ENCODE measurements at regions of chrX and their contacts with region 1.

Region 1: DNA sequence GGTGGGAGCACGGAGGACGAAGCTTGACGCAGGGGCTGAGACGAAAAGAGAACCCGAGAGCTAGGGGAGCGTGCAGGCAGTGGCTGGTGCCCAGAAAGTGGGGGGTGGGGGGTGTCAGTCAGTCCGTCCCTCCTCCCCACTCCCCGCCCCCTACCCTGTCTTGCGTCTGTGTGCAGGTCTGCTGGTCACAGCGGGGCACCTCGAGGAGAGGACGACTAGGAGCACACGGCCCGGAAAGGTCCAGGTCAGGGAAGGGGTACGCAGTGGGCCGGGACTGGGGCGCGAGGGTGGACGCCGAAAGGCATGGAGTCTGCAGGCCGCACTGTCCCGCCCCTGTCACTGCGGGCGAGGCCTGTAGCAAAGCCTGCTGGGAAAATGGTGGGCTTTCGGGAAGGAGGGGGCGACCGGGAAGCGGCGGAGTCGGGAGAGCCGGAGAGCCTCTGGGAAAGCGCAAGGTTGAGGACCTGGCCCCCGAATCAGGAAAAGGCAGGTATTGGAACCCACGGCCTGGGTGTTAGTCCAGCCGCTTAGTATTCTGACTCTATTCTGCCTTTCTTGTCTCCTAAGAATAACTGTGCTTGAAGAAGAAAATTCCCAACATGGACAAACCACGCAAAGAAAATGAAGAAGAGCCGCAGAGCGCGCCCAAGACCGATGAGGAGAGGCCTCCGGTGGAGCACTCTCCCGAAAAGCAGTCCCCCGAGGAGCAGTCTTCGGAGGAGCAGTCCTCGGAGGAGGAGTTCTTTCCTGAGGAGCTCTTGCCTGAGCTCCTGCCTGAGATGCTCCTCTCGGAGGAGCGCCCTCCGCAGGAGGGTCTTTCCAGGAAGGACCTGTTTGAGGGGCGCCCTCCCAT is 769 bp downstream of the TCEAL1 start:
- DNase-seq: peak; percentile 66 to 77 (median 72)
- ATAC-seq: peak; percentile 90 to 94 (median 93)
- H3K4me3 ChIP-seq: peak overlapping the region; percentile 39 to 94 (median 72)
- H3K27ac ChIP-seq: peak overlapping the region; percentile 70 to 97 (median 93)
- H3K4me1 ChIP-seq: peaks cover 0 to 23% (median 4%) of the 10 kb centered on the region in 12 donors
- H3K27me3 ChIP-seq: peaks cover 0 to 15% (median 0%) of the 10 kb centered on the region in 9 donors
- CTCF ChIP-seq: peak in 10 of 12 donors; percentile 12 to 66 (median 46)
- POLR2A ChIP-seq: no peak

Region 2: DNA sequence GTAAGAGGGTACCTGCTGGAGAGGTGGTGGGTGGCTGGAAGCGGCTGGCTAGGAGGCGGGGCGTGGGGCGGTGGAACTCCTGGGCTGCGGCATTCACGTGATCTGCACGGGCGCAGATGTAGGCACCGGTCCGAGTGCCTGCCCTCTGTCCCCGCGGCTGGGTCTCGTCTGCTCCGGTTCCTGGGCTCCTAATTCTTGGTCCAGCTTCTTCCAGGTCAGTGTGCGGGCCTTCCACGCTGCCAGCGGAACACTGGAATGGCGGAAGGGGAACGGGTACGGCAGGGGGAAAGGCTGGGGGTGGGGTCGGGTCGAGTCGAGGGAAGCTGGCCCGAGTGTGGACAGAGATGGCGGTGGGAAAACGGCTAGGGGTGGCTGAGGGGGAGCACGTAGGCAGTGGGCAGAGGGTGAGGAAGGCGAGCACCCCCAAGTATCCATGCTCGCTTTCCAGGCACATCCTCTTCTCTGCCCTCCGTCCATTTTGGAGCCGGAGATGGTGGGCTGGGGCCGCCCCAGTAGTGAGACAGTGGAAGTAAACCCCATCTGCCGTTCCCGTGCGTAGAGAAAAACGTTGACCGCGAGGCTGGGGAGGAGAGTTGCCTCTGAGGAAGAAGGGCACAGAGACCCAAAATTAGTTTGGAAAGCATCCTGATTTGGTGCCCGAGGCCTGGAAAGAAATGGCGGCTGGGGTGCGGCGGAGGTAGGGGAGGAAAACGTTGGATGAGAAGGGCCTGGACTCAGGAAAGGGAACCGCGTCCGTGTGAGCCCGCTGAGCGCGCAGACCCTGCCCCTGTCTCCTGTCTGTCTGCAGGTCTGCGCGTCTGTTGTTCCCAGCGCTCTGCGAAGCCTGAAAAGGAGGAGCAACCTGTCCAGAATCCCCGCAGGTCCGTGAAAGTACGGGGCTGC is 43.9 kb before region 1 on chrX and contains the start of gene TCEAL4:
- intact Hi-C with region 1: loop called in 1 of 10 experiments (anchors 2 kb)
- DNase-seq: peak; percentile 54 to 69 (median 65)
- ATAC-seq: peak; percentile 82 to 95 (median 94)
- H3K4me3 ChIP-seq: peak within 1 kb of the TSS; percentile 42 to 93 (median 66)
- H3K27ac ChIP-seq: peak within 1 kb of the TSS; percentile 62 to 89 (median 84)
- H3K4me1 ChIP-seq: peaks cover 0 to 18% (median 0%) of the 10 kb centered on the region in 12 donors
- H3K27me3 ChIP-seq: peaks cover 0 to 3% (median 0%) of the 10 kb centered on the region in 9 donors
- CTCF ChIP-seq: no peak
- POLR2A ChIP-seq: peak in 1 of 2 donors; percentile 29
- total RNA-seq, gene TCEAL4: 50.9 to 75.3 (median 64.8) TPM

Region 3: DNA sequence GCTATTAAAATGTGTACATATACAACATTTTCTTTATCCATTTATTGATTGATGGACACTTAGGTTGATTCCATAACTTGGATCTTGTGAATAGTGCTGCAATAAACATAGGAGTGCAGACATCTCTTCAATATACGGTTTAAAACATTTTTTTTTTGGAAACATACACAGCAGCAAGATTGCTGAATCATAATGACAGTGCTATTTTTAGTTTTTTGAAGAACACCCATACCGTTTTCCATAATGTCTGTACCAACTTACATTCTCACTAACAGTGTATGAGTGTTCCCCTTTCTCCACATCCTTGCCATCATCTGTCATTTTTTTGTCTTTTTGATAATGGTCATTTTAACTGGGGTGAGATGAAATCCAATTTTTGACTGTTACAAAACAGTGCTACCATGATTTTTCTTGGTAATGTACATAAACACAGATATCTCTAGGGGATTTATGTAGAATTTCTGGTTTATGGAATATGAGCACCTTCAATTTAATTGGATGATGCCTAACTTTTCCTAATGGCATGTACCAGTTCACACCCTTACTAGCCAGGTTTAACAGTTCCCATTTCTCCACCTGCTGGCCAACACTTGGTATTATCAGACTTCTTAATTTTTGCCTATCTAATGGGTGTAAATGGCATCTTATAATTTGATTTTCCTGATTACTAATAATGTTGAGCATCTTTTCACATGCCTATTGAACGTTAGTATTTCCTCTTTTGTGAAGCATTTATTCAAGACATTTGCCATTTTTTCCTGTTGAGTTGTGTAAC is 311.8 kb after region 1 on chrX:
- intact Hi-C with region 1: no loop called
- DNase-seq: no peak
- ATAC-seq: no peak
- H3K4me3 ChIP-seq: no peak overlapping the region
- H3K27ac ChIP-seq: no peak overlapping the region
- H3K4me1 ChIP-seq: no peaks in the 10 kb centered on the region
- H3K27me3 ChIP-seq: peaks cover 0 to 16% (median 0%) of the 10 kb centered on the region in 9 donors
- CTCF ChIP-seq: peak; percentile 15 to 57 (median 38)
- POLR2A ChIP-seq: no peak